ENCODE measurements at regions of chr2 and their contacts with region 1.

Region 1: DNA sequence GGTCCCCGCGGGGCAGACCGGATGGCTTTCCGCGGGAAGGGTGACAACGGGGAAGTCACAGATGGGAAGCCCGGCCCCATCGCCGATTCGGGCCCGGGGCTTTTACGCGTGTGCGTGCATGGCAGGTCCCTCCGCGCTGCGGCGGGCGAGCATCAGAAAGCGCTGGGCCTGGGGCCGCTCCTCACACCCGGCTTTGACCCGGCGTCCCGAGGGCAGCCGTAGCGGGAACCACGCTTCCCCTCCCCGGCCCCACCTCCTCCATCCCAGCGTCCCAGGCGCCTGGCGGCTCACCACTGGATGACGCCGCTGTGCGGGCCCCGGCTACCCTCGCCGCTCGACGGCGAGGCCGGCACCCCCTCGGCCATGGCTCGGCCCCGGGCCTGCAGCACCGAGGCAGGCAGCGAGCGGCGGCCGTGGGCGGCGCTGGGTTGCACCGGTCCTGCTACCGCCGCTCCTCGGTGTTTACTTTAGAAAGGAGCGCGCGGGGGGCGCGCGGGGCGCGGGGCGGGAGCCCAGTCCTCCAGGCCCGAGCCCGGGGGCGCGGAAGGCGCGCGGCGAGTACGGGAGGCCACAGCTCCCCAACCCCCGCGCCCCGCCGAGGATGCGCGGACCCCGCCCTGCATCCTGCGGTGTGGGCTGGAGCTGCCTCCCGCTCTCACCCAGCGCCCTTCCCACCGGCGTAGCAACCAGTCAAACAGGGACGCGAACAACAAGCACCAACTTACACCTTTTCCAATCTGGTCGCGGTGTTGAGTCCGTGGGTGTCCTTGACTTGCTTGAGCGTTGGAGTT is 806 bp downstream of the RFX8 start:
- DNase-seq: peak; percentile 62
- H3K4me3 Mint-ChIP-seq: peak overlapping the region; percentile 81
- H3K27ac Mint-ChIP-seq: peak overlapping the region; percentile 90
- H3K4me1 Mint-ChIP-seq: peaks cover 40% of the 10 kb centered on the region
- H3K27me3 Mint-ChIP-seq: no peaks in the 10 kb centered on the region

Region 2: GRCh38 chr2:101419096-101419663 is 54.9 kb before region 1 on chr2:
- intact Hi-C with region 1: loop called (anchors 10 kb)
- DNase-seq: peak; percentile 33
- H3K4me3 Mint-ChIP-seq: no peak overlapping the region
- H3K27ac Mint-ChIP-seq: no peak overlapping the region
- H3K4me1 Mint-ChIP-seq: peaks cover 1% of the 10 kb centered on the region
- H3K27me3 Mint-ChIP-seq: no peaks in the 10 kb centered on the region

Region 3: GRCh38 chr2:101577173-101577572 is 103.1 kb after region 1 on chr2:
- intact Hi-C with region 1: loop called (anchors 10 kb)
- DNase-seq: no peak
- H3K4me3 Mint-ChIP-seq: no peak overlapping the region
- H3K27ac Mint-ChIP-seq: no peak overlapping the region
- H3K4me1 Mint-ChIP-seq: peaks cover 41% of the 10 kb centered on the region
- H3K27me3 Mint-ChIP-seq: no peaks in the 10 kb centered on the region

Region 4: GRCh38 chr2:101717071-101717845 is 243.2 kb after region 1 on chr2:
- intact Hi-C with region 1: loop called (anchors 5 kb)
- DNase-seq: no peak
- H3K4me3 Mint-ChIP-seq: peak overlapping the region; percentile 38
- H3K27ac Mint-ChIP-seq: peak overlapping the region; percentile 83
- H3K4me1 Mint-ChIP-seq: peaks cover 60% of the 10 kb centered on the region
- H3K27me3 Mint-ChIP-seq: no peaks in the 10 kb centered on the region

Measured in activated T-helper 2 cell treated with anti-CD3 and anti-CD28 coated beads, Interferon-gamma antibody, Interleukin-2, Interleukin-4, amounts not matched to agents 10 μg/mL and 5 μg/mL and 100 μg/mL, durations not matched to agents 14 hours and 24 hours and 36 hours (primary cell).